ENCODE measurements at regions of chr12 and their contacts with region 1.

Region 1: GRCh38 chr12:4857472-4858291 is 52.0 kb upstream of the KCNA1 start:
- DNase-seq: peak; percentile 5
- H3K4me3 ChIP-seq: peak overlapping the region; percentile 27
- CTCF ChIP-seq: peak; percentile 88

Region 2: DNA sequence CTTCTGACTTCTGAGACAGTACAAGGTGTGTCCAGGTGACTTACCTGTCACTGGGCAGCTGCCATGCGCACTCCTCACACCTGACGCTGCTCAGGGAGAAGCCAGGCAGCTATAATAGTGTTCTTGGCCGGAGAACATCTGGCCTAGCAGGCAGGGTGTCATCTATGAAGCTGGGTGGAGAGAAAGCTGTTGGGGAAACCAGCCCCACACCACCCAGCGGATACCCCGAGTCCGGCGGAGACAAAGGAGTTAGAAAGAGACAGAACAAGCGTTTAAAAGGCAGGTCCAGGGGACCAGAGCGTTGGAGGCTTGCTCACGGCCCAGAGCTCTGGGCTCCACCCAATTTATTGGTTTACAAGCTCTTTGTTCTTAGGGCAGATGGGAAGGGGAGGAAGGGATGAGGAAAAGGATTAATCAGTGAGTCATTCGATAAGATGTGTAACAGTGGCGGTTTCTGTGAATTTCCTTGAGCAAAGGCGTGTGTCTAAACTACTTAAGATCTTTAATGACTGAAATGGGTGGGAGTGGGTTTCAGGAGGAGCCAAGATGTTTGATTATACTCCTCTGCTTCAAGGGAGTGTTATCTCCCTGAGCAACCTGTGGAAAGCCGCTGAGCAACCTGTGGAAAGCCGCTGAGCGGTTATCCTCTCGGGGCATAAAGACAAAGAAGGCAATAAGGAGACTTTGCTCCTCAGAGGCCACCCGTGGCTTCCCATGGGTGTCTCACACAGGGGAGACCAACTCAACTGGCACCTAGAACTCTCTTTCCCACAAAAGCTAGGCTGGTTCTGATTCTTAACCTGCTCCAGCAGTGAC is 137.7 kb before region 1 on chr12 and contains the start of gene GALNT8:
- CTCF ChIA-PET with region 1: no interaction called
- POLR2A ChIA-PET with region 1: no interaction called
- DNase-seq: no peak
- H3K4me3 ChIP-seq: no peak within 1 kb of the TSS
- CTCF ChIP-seq: no peak

Region 3: DNA sequence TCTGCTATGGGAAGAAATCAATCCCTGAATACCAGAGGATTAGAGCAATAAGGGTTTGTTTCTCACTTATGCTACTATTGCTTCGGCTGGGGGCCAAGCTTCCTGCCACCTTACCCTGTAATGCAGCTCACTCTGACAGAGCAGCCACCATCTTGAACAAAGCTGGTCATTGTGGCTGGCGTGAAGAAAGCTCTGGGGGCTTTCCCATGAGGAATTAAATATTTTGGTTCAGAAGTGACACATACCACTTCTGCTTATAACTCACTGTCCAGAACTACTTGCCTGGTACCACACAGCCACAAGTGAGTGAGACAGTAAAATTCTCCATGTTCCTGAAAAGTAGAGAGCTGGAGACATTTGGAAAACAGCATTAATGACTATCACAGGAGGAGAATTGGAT is 54.8 kb before region 1 on chr12:
- CTCF ChIA-PET with region 1: no interaction called
- POLR2A ChIA-PET with region 1: no interaction called
- DNase-seq: no peak
- H3K4me3 ChIP-seq: no peak overlapping the region
- CTCF ChIP-seq: no peak

Region 4: DNA sequence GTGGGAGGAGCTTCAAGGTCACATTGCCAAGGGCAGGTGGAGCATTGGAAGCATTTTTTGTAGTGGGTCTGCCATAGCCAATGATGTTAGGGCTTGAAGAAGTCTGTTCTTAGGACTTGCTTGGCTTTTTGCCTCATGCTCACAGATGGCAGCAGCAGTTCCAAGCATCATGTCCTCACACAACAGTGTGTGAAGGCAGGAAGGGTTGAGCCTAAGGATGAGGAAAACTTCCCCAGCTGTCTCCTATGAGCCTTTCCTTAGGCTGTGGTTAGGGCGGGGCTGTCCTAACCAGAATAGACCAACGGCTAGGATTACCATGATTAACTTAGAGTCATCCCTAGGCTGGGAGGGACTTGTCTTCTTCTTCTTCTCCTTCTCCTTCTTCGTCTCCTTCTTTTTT is 24.2 kb before region 1 on chr12:
- CTCF ChIA-PET with region 1: interaction called, 28 read pairs
- POLR2A ChIA-PET with region 1: no interaction called
- DNase-seq: no peak
- H3K4me3 ChIP-seq: no peak overlapping the region
- CTCF ChIP-seq: no peak

Region 5: DNA sequence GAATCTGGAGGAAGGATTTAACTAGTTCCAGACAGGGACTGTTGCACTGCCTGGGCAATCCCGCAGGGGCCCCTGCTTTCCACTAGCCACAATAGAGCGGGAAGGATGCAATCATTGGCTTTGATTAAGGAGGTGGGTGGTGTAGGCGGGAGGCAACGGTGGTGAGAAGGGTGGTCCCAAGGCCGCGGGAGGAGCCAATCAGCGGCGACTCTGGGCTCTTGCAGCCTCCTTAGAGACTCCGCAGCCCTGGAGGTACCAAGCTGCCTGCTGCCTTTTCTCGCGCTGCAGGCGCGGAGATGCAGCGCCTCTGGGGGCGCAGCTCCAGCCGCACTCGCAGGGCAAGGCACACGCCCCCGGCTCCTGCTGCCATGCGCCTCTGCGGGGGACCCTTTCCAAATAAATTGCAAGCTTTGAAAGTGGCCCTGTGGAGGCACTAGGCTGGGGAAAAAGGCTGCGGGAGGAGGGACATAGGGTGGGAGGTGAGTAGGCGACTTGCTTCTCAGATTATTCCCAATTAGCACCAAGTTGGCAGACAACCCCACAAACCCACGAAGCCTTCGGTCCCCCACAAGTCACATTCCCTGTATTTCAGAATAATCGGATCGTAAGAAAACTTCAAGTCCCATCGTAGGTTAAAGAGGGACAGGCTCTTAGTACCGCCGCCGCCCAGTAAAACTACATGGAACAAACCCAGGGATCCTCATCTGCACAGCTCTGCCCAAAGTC is 51.2 kb after region 1 on chr12:
- CTCF ChIA-PET with region 1: interaction called, 28 read pairs
- POLR2A ChIA-PET with region 1: no interaction called
- DNase-seq: no peak
- H3K4me3 ChIP-seq: no peak overlapping the region
- CTCF ChIP-seq: no peak

Region 6: DNA sequence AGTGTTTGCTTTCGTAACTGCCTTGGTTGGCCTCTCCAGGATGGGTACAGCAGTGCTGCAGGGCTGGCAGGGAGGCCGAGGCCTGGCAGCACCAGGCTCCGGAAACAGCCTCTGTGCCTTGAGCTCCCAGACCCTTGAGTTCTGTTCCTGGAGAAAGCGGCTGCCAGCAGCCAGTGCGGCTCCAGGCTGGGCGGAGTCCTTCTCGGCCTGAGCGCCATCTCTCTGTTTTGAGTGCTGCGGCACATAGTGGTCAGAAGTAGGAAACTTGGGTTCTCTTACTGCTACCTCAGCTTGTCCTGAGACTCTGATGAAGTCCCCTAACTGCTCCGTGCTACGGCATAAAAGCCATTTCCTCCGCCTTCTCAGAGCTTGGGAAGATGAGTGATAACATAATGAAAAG is 117.9 kb after region 1 on chr12:
- CTCF ChIA-PET with region 1: interaction called, 18 read pairs
- POLR2A ChIA-PET with region 1: no interaction called
- DNase-seq: no peak
- H3K4me3 ChIP-seq: no peak overlapping the region
- CTCF ChIP-seq: no peak

Region 7: GRCh38 chr12:5003020-5003666 is 145.5 kb after region 1 on chr12:
- CTCF ChIA-PET with region 1: interaction called, 351 read pairs
- POLR2A ChIA-PET with region 1: no interaction called
- DNase-seq: no peak
- H3K4me3 ChIP-seq: no peak overlapping the region
- CTCF ChIP-seq: peak; percentile 97

Region 8: DNA sequence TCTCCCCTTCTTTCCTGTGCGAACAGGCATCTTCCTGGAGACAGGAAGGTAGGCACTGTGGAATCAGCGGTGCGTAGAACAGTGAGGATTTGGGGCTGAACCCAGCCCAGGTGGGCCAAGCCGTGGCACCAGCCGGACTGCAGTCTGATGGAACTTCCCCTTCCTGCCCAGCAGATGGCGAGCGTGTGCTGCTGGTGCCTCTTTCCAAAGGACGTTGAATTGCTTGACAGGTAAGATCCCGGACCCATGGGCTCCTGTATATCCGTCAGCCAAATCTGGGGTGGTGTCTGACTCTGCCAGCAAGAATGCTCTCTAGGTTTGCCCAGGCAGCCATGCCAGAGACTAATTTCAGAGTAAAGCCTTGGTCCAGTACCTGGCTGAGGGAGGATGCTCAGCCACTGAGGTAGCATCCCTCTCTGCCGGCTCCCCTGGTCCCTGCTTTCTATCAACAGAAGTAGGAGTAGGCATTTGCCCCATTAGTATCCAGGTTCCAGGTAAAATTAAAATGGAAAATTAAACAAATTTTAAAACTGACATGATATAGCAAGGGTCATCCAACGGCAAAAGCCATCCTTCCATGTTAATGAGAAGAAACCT is 164.9 kb after region 1 on chr12:
- CTCF ChIA-PET with region 1: interaction called, 36 read pairs
- POLR2A ChIA-PET with region 1: no interaction called
- DNase-seq: no peak
- H3K4me3 ChIP-seq: no peak overlapping the region
- CTCF ChIP-seq: peak; percentile 92

Measured in AG04449 (cell line).